CD4-positive, alpha-beta T cell (primary cell): ENCODE measurements at regions of chr13 and their contacts with region 1.

Region 1: GRCh38 chr13:113208424-113209335 is at the start of gene PCID2:
- DNase-seq: peak; percentile 84 to 96 (median 90)
- ATAC-seq: peak; percentile 64
- H3K4me3 ChIP-seq: peak within 1 kb of the TSS; percentile 71
- H3K4me3 Mint-ChIP-seq: peak within 1 kb of the TSS; percentile 95
- H3K27ac ChIP-seq: peak within 1 kb of the TSS; percentile 90 to 93
- H3K27ac Mint-ChIP-seq: peak within 1 kb of the TSS; percentile 88
- H3K4me1 ChIP-seq: peaks cover 65% of the 10 kb centered on the region
- H3K4me1 Mint-ChIP-seq: peaks cover 64% of the 10 kb centered on the region
- H3K27me3 ChIP-seq: no peaks in the 10 kb centered on the region
- H3K27me3 Mint-ChIP-seq: no peaks in the 10 kb centered on the region
- CTCF ChIP-seq: no peak
- total RNA-seq, gene PCID2: 33.6 to 33.7 TPM

Region 2: GRCh38 chr13:112689303-112690165 is 519.1 kb before region 1 on chr13 and contains the start of gene ATP11A:
- CTCF ChIA-PET with region 1: no interaction called
- POLR2A ChIA-PET with region 1: no interaction called
- intact Hi-C with region 1: loop called in 1 of 2 experiments (anchors 5 kb)
- DNase-seq: peak; percentile 57 to 93 (median 76)
- ATAC-seq: peak; percentile 80
- H3K4me3 ChIP-seq: peak within 1 kb of the TSS; percentile 88
- H3K4me3 Mint-ChIP-seq: peak within 1 kb of the TSS; percentile 92
- H3K27ac ChIP-seq: peak within 1 kb of the TSS; percentile 79 to 88
- H3K27ac Mint-ChIP-seq: peak within 1 kb of the TSS; percentile 75
- H3K4me1 ChIP-seq: peaks cover 53% of the 10 kb centered on the region
- H3K4me1 Mint-ChIP-seq: peaks cover 53% of the 10 kb centered on the region
- H3K27me3 ChIP-seq: no peaks in the 10 kb centered on the region
- H3K27me3 Mint-ChIP-seq: no peaks in the 10 kb centered on the region
- CTCF ChIP-seq: no peak
- total RNA-seq, gene ATP11A: 56.7 to 66.8 TPM

Region 3: GRCh38 chr13:112968908-112969691 is 239.6 kb before region 1 on chr13 and contains the start of gene MCF2L:
- CTCF ChIA-PET with region 1: no interaction called
- POLR2A ChIA-PET with region 1: interaction called, 26 read pairs
- intact Hi-C with region 1: loop called (anchors 2 kb)
- DNase-seq: peak; percentile 46 to 86 (median 66)
- ATAC-seq: peak; percentile 78
- H3K4me3 ChIP-seq: peak within 1 kb of the TSS; percentile 58
- H3K4me3 Mint-ChIP-seq: peak within 1 kb of the TSS; percentile 89
- H3K27ac ChIP-seq: peak within 1 kb of the TSS; percentile 44 to 72
- H3K27ac Mint-ChIP-seq: peak within 1 kb of the TSS; percentile 80
- H3K4me1 ChIP-seq: peaks cover 34% of the 10 kb centered on the region
- H3K4me1 Mint-ChIP-seq: peaks cover 37% of the 10 kb centered on the region
- H3K27me3 ChIP-seq: no peaks in the 10 kb centered on the region
- H3K27me3 Mint-ChIP-seq: no peaks in the 10 kb centered on the region
- CTCF ChIP-seq: no peak
- total RNA-seq, gene MCF2L: 13.0 to 13.5 TPM

Region 4: DNA sequence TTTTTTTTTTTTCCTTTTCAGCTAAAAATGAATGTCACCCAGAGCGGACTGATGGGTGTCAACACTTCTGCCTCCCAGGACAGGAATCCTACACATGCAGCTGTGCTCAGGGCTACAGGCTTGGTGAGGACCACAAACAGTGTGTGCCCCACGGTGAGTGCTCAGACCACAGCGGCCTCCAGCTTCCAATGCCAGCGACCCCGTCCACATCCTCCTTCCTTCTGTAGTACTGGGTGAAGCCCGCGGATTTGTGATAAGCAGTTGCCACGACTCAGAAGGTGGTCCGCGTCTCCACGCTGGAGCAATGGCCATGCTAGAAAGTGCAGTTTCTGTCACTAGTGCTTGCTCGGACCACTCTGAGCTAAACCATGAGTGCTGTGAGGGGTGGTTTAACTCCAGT is 44.2 kb before region 1 on chr13:
- CTCF ChIA-PET with region 1: no interaction called
- POLR2A ChIA-PET with region 1: interaction called, 10 read pairs
- intact Hi-C with region 1: no loop called
- DNase-seq: no peak
- ATAC-seq: peak; percentile 12
- H3K4me3 ChIP-seq: no peak overlapping the region
- H3K4me3 Mint-ChIP-seq: no peak overlapping the region
- H3K27ac ChIP-seq: no peak overlapping the region
- H3K27ac Mint-ChIP-seq: peak overlapping the region; percentile 60
- H3K4me1 ChIP-seq: peaks cover 19% of the 10 kb centered on the region
- H3K4me1 Mint-ChIP-seq: peaks cover 37% of the 10 kb centered on the region
- H3K27me3 ChIP-seq: no peaks in the 10 kb centered on the region
- H3K27me3 Mint-ChIP-seq: no peaks in the 10 kb centered on the region
- CTCF ChIP-seq: no peak

Region 5: GRCh38 chr13:113296842-113297369 is 88.2 kb after region 1 on chr13 and contains the start of gene LAMP1:
- CTCF ChIA-PET with region 1: no interaction called
- POLR2A ChIA-PET with region 1: interaction called, 22 read pairs
- intact Hi-C with region 1: loop called in 1 of 2 experiments (anchors 1 kb)
- DNase-seq: peak; percentile 97 to 100 (median 99)
- ATAC-seq: peak; percentile 83
- H3K4me3 ChIP-seq: peak within 1 kb of the TSS; percentile 77
- H3K4me3 Mint-ChIP-seq: peak within 1 kb of the TSS; percentile 100
- H3K27ac ChIP-seq: peak within 1 kb of the TSS; percentile 83 to 88
- H3K27ac Mint-ChIP-seq: peak within 1 kb of the TSS; percentile 99
- H3K4me1 ChIP-seq: peaks cover 37% of the 10 kb centered on the region
- H3K4me1 Mint-ChIP-seq: peaks cover 36% of the 10 kb centered on the region
- H3K27me3 ChIP-seq: peaks cover 3 to 8% of the 10 kb centered on the region in 2 experiments
- H3K27me3 Mint-ChIP-seq: peaks cover 20% of the 10 kb centered on the region
- CTCF ChIP-seq: no peak
- total RNA-seq, gene LAMP1: 72.2 to 80.7 TPM

Region 6: DNA sequence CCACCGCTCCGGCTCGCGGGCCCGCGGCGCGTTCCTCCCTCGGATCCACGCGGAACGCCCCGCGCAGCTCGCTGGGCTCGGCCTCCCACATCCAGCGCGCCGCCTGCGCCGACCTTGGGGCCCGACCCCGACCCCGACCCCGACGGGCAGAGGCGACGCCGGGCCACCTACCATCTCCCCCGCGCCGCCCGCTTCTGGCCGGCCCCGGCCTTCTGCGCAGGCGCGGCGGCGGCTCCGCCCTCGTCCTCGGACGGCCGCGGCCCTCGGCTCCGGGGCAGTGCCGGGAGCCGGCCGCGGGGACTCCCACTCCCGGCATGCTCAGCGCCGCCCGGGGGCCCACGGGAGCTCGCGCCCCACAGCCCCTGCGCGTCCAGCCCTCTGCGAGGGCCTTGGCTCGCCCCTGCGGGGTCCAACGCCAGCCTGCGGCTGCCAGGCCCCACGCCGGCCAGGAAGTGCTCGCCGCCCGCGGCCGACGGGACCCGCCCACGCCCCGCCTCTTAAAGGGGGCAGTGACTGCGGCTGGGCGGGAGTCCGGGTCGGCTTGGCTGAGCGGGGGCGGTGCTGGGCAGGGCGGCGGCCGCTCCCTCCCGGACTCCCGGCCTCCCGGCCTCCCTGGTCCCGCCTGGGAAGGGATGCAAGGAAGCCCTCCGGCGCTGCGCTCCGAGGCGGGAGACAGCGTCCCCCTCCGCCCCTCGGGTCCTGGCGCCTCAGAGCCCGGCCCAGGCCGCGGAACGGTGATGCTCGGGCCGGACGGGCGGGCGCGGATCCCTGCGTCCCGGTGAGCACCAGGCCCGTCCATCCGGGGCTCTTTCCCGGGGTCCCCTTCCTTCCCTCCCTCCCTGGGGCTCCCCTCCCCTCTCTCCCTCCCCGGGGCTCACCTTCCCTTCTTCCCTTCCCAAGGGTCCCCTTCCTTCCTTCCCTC is 282.1 kb after region 1 on chr13 and contains the start of gene DCUN1D2:
- CTCF ChIA-PET with region 1: no interaction called
- POLR2A ChIA-PET with region 1: interaction called, 5 read pairs
- intact Hi-C with region 1: loop called in 1 of 2 experiments (anchors 10 kb)
- DNase-seq: peak; percentile 39 to 87 (median 66)
- ATAC-seq: peak; percentile 71
- H3K4me3 ChIP-seq: peak within 1 kb of the TSS; percentile 79
- H3K4me3 Mint-ChIP-seq: peak within 1 kb of the TSS; percentile 97
- H3K27ac ChIP-seq: peak within 1 kb of the TSS in 1 of 2 donors; percentile 39
- H3K27ac Mint-ChIP-seq: peak within 1 kb of the TSS; percentile 87
- H3K4me1 ChIP-seq: peaks cover 37% of the 10 kb centered on the region
- H3K4me1 Mint-ChIP-seq: peaks cover 70% of the 10 kb centered on the region
- H3K27me3 ChIP-seq: no peaks in the 10 kb centered on the region
- H3K27me3 Mint-ChIP-seq: no peaks in the 10 kb centered on the region
- CTCF ChIP-seq: no peak
- total RNA-seq, gene DCUN1D2: 16.2 to 18.9 TPM